Heart right ventricle (tissue), 16 donors: ENCODE measurements at regions of chr1 and their contacts with region 1.

Region 1: GRCh38 chr1:43319766-43320165 is 17.9 kb upstream of the MPL start:
- DNase-seq: no peak
- ATAC-seq: no peak
- H3K4me3 ChIP-seq: no peak overlapping the region
- H3K27ac ChIP-seq: no peak overlapping the region
- H3K4me1 ChIP-seq: peaks cover 0 to 12% (median 0%) of the 10 kb centered on the region in 9 donors
- H3K27me3 ChIP-seq: no peaks in the 10 kb centered on the region
- CTCF ChIP-seq: no peak

Region 2: DNA sequence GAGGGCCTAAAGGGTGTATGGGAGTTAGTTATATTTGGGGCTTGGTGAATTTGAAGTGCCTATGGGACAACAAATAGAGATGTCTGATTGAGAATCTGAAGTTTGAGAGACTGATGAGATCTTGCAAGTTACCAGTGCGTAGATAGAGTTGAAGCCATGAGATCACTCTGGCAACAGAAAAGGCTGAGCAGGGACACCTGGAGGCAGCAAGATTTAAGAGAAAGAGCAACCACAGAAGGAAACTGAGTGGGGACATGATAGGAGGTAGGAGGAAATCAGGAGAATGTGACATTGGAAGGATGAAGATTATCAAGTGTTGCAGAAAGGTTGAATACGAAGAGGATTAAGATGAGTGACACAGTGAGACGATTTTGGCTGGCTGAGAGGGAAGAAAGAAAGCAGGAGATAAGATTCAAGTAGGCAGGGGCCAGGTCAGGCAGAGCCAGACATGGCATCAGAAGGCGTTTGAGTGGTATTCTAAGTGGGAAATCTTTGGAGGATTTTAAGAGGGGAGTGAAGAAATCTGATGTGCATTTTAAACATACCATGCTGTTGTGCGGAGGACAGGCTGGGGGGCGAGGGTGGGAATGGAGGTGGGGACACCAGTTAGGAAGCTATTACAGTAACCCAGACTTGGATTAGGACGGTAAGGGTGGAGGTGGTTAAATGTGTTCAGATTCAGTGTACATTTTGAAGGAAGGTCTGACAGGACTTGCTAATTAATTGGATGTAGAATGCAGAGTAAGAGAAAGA is 14.9 kb after region 1 on chr1:
- intact Hi-C with region 1: loop called in 1 of 10 experiments (anchors 1 kb)
- DNase-seq: no peak
- ATAC-seq: no peak
- H3K4me3 ChIP-seq: no peak overlapping the region
- H3K27ac ChIP-seq: no peak overlapping the region
- H3K4me1 ChIP-seq: peaks cover 7 to 17% (median 14%) of the 10 kb centered on the region in 9 donors
- H3K27me3 ChIP-seq: no peaks in the 10 kb centered on the region
- CTCF ChIP-seq: peak in 2 of 9 donors; percentile 8 to 12

Region 3: DNA sequence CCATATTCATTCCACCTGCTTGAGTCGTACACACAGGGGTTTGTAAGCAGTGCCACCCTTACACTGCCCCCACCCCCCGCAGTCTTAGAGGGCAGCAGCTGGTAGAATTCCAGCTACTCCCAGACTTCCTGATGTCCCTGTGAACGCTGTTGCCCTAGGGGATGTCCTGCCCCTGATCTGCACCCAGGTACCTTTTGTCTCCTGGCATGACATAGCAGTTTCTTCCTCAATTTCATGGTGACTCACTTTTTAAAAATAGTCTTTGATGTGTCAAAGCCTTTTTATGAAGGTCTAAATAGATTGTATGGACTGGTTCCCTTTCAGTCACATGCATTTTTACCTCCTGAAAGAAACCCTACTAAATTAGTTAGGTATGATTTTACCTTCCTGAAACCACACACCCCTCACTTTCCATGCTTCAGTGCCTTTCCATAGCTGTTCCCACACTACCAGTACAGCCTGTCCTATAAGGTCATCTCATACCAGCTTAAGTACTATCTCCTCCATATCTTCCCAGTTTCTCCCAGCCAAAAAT is 464.0 kb after region 1 on chr1:
- intact Hi-C with region 1: no loop called
- DNase-seq: no peak
- ATAC-seq: peak in 6 of 8 donors; percentile 18 to 76 (median 54)
- H3K4me3 ChIP-seq: no peak overlapping the region
- H3K27ac ChIP-seq: peak overlapping the region in 1 of 10 donors; percentile 24
- H3K4me1 ChIP-seq: peaks cover 3 to 37% (median 31%) of the 10 kb centered on the region in 9 donors
- H3K27me3 ChIP-seq: no peaks in the 10 kb centered on the region
- CTCF ChIP-seq: no peak